CD8-positive, alpha-beta memory T cell (primary cell): ENCODE measurements at regions of chr10 and their contacts with region 1.

Region 1: GRCh38 chr10:88990384-88991160 is at the start of gene FAS:
- DNase-seq: peak; percentile 64 to 88 (median 77)
- H3K4me3 ChIP-seq: peak within 1 kb of the TSS; percentile 88
- H3K4me3 Mint-ChIP-seq: peak within 1 kb of the TSS; percentile 93 to 100 (median 99)
- H3K27ac ChIP-seq: peak within 1 kb of the TSS; percentile 83
- H3K27ac Mint-ChIP-seq: peak within 1 kb of the TSS; percentile 91 to 99 (median 97)
- H3K4me1 ChIP-seq: peaks cover 65% of the 10 kb centered on the region
- H3K4me1 Mint-ChIP-seq: peaks cover 65 to 83% (median 75%) of the 10 kb centered on the region in 3 donors
- H3K27me3 ChIP-seq: no peaks in the 10 kb centered on the region
- H3K27me3 Mint-ChIP-seq: no peaks in the 10 kb centered on the region
- total RNA-seq, gene FAS: 77.9 to 78.5 TPM

Region 2: GRCh38 chr10:88974446-88975376 is 15.9 kb before region 1 on chr10:
- CTCF ChIA-PET with region 1: interaction called, 14 read pairs
- POLR2A ChIA-PET with region 1: interaction called, 5 read pairs
- DNase-seq: peak in 2 of 5 donors; percentile 23 to 27
- H3K4me3 ChIP-seq: peak overlapping the region; percentile 51
- H3K4me3 Mint-ChIP-seq: peak overlapping the region; percentile 87 to 99 (median 94)
- H3K27ac ChIP-seq: peak overlapping the region; percentile 12
- H3K27ac Mint-ChIP-seq: peak overlapping the region; percentile 87 to 99 (median 98)
- H3K4me1 ChIP-seq: peaks cover 17% of the 10 kb centered on the region
- H3K4me1 Mint-ChIP-seq: peaks cover 21 to 29% (median 23%) of the 10 kb centered on the region in 3 donors
- H3K27me3 ChIP-seq: no peaks in the 10 kb centered on the region
- H3K27me3 Mint-ChIP-seq: peaks cover 0 to 2% of the 10 kb centered on the region in 2 donors

Region 3: GRCh38 chr10:89001024-89001728 is 10.6 kb after region 1 on chr10:
- CTCF ChIA-PET with region 1: interaction called, 16 read pairs
- POLR2A ChIA-PET with region 1: interaction called, 13 read pairs
- DNase-seq: peak in 2 of 5 donors; percentile 24 to 53
- H3K4me3 ChIP-seq: peak overlapping the region; percentile 9
- H3K4me3 Mint-ChIP-seq: peak overlapping the region; percentile 81 to 94 (median 86)
- H3K27ac ChIP-seq: peak overlapping the region; percentile 21
- H3K27ac Mint-ChIP-seq: peak overlapping the region; percentile 57 to 97 (median 94)
- H3K4me1 ChIP-seq: peaks cover 51% of the 10 kb centered on the region
- H3K4me1 Mint-ChIP-seq: peaks cover 69 to 90% (median 85%) of the 10 kb centered on the region in 3 donors
- H3K27me3 ChIP-seq: no peaks in the 10 kb centered on the region
- H3K27me3 Mint-ChIP-seq: no peaks in the 10 kb centered on the region

Region 4: GRCh38 chr10:89171263-89171872 is 180.8 kb after region 1 on chr10:
- CTCF ChIA-PET with region 1: no interaction called
- POLR2A ChIA-PET with region 1: no interaction called
- DNase-seq: no peak
- H3K4me3 ChIP-seq: no peak overlapping the region
- H3K4me3 Mint-ChIP-seq: no peak overlapping the region
- H3K27ac ChIP-seq: no peak overlapping the region
- H3K27ac Mint-ChIP-seq: no peak overlapping the region
- H3K4me1 ChIP-seq: no peaks in the 10 kb centered on the region
- H3K4me1 Mint-ChIP-seq: no peaks in the 10 kb centered on the region
- H3K27me3 ChIP-seq: no peaks in the 10 kb centered on the region
- H3K27me3 Mint-ChIP-seq: peaks cover 9 to 44% of the 10 kb centered on the region in 2 donors